GM18951 (cell line): ENCODE measurements at regions of chr12 and their contacts with region 1.

Region 1: DNA sequence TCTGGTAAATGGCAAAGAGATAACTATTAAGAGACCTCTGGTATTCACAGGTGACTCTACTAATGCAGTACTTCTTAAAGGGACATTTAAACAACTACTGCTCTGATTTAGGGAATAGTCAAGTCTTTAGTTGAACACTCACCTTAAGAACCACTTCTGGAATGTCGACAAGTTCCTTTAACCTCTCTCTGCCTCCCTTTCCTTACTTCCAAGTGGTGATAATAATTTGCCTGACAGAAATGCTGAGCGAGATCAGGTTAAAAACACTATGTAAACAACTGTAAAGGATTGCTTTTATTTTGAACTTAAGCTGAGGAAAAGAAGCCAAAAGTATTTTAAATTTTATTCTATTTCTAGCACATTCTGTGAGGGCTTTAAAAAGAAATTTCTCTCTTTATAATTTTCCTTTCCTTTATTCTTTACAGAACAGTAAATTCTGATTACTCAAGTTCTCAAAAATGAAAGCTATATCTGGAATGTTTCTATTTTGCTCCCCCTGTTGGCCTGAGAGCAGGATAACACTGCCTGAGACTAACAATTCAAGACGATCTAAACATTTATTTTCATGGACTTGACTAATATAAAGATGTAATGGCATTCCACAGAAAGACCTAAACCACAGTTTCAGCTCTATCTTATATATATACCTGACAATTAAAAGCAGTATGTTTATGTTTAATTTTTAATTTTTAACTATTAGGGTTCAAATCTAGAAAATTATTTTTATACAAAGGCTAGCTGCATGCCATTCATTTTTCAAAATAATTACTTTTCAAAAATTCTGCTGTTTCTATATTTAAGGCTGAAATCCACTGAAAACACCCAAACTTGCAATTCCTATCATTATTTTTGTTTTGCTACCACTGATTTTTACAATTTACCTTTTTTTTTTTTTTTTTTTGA is 29.2 kb downstream of the ZCCHC8 start:
- POLR2A ChIP-seq: no peak

Region 2: GRCh38 chr12:122399592-122400373 is 71.8 kb before region 1 on chr12:
- in situ Hi-C with region 1: loop called (anchors 5 kb)
- POLR2A ChIP-seq: no peak

Region 3: DNA sequence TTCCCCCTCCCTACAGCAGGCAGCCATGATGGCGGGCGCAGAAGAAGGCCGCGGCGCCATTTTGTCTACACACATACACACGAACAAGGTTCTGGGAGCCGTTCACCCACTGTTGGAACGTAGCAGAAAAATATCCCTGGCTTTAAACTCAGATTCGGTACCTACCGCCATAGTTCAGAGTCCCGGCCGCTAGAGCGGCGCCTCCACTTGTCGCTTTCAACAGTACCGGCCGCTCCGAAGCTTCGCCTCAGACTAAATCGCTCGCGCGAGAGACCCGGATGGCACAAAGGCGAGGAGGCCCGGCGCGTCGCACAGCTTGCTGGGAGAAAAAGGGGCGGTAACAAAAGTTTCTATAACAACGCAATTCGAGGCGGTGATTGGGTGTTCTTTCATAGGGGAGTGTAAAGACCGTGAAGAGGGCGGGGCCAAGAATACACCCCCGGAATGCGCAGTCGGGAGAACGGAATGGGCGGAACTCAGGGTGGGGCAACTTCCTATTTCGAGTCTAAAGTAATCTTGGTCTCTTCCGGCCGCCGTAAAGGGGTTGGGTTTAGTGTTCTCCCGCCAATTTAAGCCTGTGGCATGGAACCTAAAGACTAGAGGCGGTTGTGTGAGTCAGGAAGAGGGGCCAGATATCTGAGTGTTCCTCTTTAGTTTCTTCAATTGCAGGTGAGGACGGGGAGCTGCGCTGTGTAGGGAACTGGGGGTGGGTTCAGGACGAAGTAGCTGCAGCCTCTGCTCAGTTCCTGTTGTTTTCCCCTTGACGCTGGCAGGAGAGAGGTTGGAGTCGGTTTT is 55.3 kb after region 1 on chr12 and contains the starts of genes KNTC1 and RSRC2:
- in situ Hi-C with region 1: no loop called
- POLR2A ChIP-seq: peak; percentile 98

Region 4: GRCh38 chr12:122614839-122615238 is 143.3 kb after region 1 on chr12:
- in situ Hi-C with region 1: no loop called
- POLR2A ChIP-seq: no peak

Region 5: GRCh38 chr12:122981047-122981918 is 509.7 kb after region 1 on chr12:
- in situ Hi-C with region 1: no loop called
- POLR2A ChIP-seq: no peak